Activated T-helper 2 cell treated with anti-CD3 and anti-CD28 coated beads, Interferon-gamma antibody, Interleukin-2, Interleukin-4, amounts not matched to agents 10 μg/mL and 5 μg/mL and 100 μg/mL, durations not matched to agents 14 hours and 24 hours and 36 hours (primary cell): ENCODE measurements at regions of chr2 and their contacts with region 1.

Region 1: DNA sequence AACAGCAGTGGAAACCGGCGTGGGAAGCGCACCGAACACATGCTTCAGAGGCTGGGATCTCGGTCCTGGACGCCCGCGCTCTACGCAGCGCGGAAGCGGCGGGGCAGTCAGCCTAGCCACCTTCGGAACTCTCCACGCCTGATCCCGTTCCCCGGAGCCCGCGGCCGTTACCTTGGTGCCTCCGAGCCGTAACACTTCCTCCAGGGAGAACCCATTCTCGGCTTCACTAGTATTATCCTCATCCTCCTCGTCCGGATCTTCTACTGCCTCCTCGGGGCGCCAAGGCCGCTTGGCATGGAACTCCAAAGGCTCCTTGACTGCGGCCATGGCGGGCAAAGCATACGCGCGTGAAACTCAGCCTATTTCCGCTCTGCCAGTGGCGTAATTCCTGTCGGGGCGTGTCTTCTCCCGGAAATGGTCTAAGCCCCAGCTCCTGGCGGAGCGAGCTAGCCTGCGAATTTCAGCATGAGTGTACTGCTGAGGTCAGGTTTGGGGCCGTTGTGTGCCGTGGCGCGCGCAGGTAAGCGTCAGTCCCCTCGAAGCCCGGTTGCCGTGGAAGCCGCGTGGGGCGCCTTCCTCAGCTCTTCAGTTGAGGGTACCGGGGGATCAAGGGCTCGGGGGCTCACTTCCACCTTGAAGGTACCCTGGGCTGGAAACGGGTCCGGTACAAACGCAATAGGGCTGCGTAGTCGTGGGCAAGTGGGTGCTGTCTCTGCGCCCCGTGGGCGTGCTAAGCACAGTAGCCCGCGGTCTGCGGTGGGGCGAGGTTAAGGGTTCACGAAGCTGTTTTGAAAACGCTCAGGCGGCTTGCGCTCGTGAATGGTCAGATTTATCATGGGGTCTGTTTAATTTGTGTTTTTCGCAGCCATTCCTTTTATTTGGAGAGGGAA is at the starts of genes CEBPZ and NDUFAF7:
- DNase-seq: peak; percentile 81
- H3K4me3 Mint-ChIP-seq: no peak within 1 kb of the TSS
- H3K27ac Mint-ChIP-seq: no peak within 1 kb of the TSS
- H3K4me1 Mint-ChIP-seq: peaks cover 24% of the 10 kb centered on the region
- H3K27me3 Mint-ChIP-seq: no peaks in the 10 kb centered on the region
- total RNA-seq, gene CEBPZ: 59.3 and 61.8 TPM in 2 replicates
- total RNA-seq, gene NDUFAF7: 19.8 and 21.2 TPM in 2 replicates

Region 2: GRCh38 chr2:37083873-37084794 is 147.4 kb before region 1 on chr2 and contains the starts of genes GPATCH11 and HEATR5B:
- intact Hi-C with region 1: loop called (anchors 2 kb)
- DNase-seq: peak; percentile 90
- H3K4me3 Mint-ChIP-seq: no peak within 1 kb of the TSS
- H3K27ac Mint-ChIP-seq: no peak within 1 kb of the TSS
- H3K4me1 Mint-ChIP-seq: peaks cover 35% of the 10 kb centered on the region
- H3K27me3 Mint-ChIP-seq: no peaks in the 10 kb centered on the region
- total RNA-seq, gene GPATCH11: 14.4 and 14.9 TPM in 2 replicates
- total RNA-seq, gene HEATR5B: 15.3 and 16.8 TPM in 2 replicates

Region 3: DNA sequence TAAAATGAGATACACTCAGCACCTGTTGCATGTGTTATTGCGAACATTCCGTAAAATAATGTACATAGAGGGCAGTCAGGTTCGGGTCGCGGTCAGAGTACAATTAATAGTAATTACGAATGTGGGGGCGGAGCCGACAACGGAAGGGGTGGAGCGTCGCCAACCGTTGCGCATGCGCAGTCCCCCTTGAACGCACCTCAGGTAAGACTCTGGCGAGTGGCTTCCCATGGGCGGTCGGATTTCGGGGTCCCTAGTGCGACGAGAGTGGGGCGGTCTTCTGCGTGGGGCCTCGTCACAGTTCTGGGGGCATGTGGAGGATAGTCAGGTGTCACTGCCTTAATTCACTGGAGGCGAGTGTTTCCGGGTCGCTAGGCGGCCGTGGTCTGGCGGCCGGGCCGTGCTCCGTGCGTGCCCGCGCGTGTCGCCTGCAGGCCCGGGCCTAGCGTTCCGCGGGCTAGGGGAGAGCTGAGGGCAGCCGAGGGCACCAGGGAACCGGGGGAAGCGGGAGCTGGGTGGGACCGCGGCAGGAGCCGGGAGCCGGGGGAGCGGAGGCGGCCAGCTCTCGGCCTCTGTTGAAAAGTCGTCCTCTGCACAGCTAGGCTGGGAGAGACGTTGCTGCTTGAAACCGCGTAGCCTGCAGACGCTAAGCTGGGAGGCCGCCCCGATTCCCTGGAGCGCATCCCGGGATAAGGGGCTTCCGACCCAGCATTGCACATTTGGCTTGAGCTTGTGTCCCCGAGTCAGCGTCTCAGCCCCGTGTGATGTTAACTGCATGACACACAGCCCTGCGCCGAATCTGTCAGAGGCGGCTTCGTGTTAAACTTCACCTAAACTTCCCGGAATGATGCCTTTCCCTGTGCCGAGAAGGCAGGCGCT is 34.9 kb before region 1 on chr2 and contains the start of gene CEBPZOS:
- intact Hi-C with region 1: loop called (anchors 1 kb)
- DNase-seq: peak; percentile 82
- H3K4me3 Mint-ChIP-seq: peak within 1 kb of the TSS; percentile 96
- H3K27ac Mint-ChIP-seq: peak within 1 kb of the TSS; percentile 97
- H3K4me1 Mint-ChIP-seq: peaks cover 24% of the 10 kb centered on the region
- H3K27me3 Mint-ChIP-seq: peaks cover 1% of the 10 kb centered on the region
- total RNA-seq, gene CEBPZOS: 37.3 and 42.3 TPM in 2 replicates

Region 4: GRCh38 chr2:37244017-37244416 is 12.5 kb after region 1 on chr2:
- intact Hi-C with region 1: loop called (anchors 1 kb)
- DNase-seq: no peak
- H3K4me3 Mint-ChIP-seq: no peak overlapping the region
- H3K27ac Mint-ChIP-seq: no peak overlapping the region
- H3K4me1 Mint-ChIP-seq: peaks cover 32% of the 10 kb centered on the region
- H3K27me3 Mint-ChIP-seq: no peaks in the 10 kb centered on the region

Region 5: DNA sequence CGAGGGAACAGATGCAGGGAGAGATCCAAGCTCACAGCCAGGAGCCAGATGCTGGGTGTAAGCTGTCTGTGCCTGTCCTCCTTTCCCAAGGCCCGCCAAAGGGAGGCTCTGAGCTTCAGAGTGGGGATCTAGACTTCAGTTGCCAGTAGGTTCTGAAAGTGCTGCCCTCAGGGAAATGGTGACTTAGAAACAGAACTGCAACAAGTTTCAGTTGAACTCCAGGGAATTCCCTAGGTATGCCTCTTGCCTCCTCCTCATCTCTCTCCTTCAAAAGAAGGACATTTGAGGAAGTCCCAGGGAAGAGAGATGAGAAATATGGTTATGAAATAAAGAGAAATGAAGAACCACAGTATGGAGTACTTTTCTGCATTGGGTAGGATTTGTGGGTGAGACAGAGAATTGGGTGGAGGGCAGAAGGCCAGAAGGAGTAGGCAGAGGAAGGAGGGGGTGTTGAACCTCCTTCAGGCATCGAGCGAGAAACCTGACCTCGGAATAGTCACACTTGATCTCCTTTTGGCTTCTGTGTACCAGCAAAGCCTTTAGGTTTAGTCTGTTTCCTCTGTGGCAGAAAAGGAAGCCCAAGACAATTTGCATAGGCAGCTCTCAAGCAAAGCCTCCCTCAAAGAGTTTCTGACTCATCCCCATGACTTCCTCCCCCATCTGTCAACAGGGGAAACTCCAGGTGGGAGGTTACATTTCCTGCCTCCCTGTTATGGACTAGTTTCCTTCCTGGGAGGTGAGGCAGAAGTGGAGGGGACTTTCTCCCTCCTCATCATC is 158.7 kb after region 1 on chr2:
- intact Hi-C with region 1: loop called (anchors 1 kb)
- DNase-seq: peak; percentile 59
- H3K4me3 Mint-ChIP-seq: peak overlapping the region; percentile 7
- H3K27ac Mint-ChIP-seq: peak overlapping the region; percentile 79
- H3K4me1 Mint-ChIP-seq: peaks cover 20% of the 10 kb centered on the region
- H3K27me3 Mint-ChIP-seq: peaks cover 10% of the 10 kb centered on the region